ENCODE measurements at regions of chr20 and their contacts with region 1.

Region 1: GRCh38 chr20:33686100-33686983 is at the start of gene E2F1:
- DNase-seq: peak; percentile 98
- ATAC-seq: peak; percentile 84
- H3K4me3 Mint-ChIP-seq: peak within 1 kb of the TSS; percentile 95
- H3K27ac Mint-ChIP-seq: peak within 1 kb of the TSS; percentile 83
- H3K4me1 Mint-ChIP-seq: peaks cover 73% of the 10 kb centered on the region
- H3K27me3 Mint-ChIP-seq: no peaks in the 10 kb centered on the region
- total RNA-seq, gene E2F1: 45.9 to 50.9 TPM

Region 2: GRCh38 chr20:32535953-32536823 is 1150.2 kb before region 1 on chr20:
- CTCF ChIA-PET with region 1: no interaction called
- POLR2A ChIA-PET with region 1: no interaction called
- intact Hi-C with region 1: loop called in 1 of 2 experiments (anchors 5 kb)
- DNase-seq: peak; percentile 88
- ATAC-seq: peak; percentile 27
- H3K4me3 Mint-ChIP-seq: peak overlapping the region; percentile 72
- H3K27ac Mint-ChIP-seq: peak overlapping the region; percentile 95
- H3K4me1 Mint-ChIP-seq: peaks cover 82% of the 10 kb centered on the region
- H3K27me3 Mint-ChIP-seq: no peaks in the 10 kb centered on the region

Region 3: DNA sequence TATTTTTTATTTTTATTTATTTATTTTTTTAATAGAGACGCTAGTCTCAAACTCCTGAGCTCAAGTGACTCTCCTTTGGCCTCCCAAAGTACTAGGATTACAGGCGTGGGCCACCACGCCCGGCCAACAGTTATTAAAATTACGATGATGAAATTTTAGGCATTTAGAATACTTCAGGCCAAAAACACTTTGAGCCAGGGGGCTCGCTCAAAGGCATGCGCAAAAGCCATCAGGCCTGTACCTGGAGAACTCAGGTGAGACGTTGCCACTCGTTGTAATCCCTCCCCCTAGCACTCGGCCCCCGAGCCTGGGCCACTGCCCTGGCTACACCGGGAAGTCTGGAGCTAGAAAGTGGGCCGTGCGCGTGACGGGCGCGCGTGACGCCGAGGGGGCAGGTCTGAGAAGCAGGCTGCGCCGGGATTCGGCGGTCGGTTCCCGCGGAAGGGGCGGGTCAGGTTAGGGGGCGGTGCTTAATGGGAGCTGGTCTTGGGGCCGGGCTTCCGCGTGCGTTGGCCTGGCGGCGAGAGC is 196.8 kb before region 1 on chr20:
- CTCF ChIA-PET with region 1: interaction called, 3 read pairs
- POLR2A ChIA-PET with region 1: no interaction called
- intact Hi-C with region 1: loop called in 1 of 2 experiments (anchors 1 kb)
- DNase-seq: peak; percentile 99
- ATAC-seq: peak; percentile 98
- H3K4me3 Mint-ChIP-seq: peak overlapping the region; percentile 85
- H3K27ac Mint-ChIP-seq: peak overlapping the region; percentile 78
- H3K4me1 Mint-ChIP-seq: peaks cover 6% of the 10 kb centered on the region
- H3K27me3 Mint-ChIP-seq: no peaks in the 10 kb centered on the region

Region 4: DNA sequence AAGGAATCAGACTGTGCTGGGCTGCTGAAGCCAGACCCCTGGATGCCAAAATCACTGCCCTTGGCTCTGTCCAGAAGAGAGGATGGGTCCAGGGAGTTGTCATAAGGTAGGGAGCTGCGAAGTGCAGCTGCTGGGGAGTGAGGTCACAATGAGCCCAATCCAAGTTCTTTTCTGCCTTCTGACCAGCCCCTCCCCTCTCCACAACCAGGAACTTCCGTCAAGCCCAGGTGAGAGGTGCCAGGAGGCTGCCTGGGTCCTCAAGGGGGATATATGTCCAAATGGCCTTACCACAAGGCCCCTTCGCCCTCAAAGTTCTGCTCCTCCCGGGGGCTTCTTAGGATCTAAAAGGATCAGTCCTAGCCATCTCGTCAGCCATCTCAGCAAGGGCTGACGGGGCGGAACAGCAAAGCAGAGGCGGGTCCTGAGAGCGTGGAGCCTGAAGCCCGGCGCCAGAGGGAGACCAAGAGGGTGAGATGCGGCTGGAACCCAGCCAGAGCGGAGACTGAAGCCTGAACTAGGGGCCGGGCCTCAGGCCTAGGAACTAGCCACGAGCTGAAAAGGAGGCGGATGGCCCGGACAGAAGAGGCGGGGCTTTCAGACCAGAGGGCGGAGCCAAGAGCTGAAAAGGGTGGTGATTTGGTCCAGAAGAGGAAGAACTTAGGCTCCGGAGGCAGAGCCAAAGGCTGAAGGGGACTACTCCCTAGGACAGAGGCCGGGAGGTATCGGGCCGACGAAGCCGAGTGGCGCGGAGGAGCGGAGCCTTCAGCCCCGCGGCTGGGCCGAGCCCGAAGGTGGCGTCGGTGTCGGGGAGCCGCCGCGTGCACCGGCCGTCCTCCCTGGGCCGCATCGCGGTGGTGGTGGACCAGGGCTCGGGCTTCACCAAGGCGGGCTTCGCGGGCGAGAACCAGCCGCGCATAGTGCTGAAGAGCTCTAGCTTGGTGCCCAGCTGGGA is 19.8 kb before region 1 on chr20 and contains the start of gene ACTL10:
- CTCF ChIA-PET with region 1: interaction called, 91 read pairs
- POLR2A ChIA-PET with region 1: interaction called, 5 read pairs
- intact Hi-C with region 1: loop called in 1 of 2 experiments (anchors 1 kb)
- DNase-seq: peak; percentile 89
- ATAC-seq: peak; percentile 59
- H3K4me3 Mint-ChIP-seq: peak within 1 kb of the TSS; percentile 75
- H3K27ac Mint-ChIP-seq: peak within 1 kb of the TSS; percentile 90
- H3K4me1 Mint-ChIP-seq: peaks cover 31% of the 10 kb centered on the region
- H3K27me3 Mint-ChIP-seq: no peaks in the 10 kb centered on the region
- total RNA-seq, gene ACTL10: 0.91 to 1.7 TPM

Region 5: GRCh38 chr20:33709398-33709797 is 23.1 kb after region 1 on chr20:
- CTCF ChIA-PET with region 1: interaction called, 3 read pairs
- POLR2A ChIA-PET with region 1: no interaction called
- intact Hi-C with region 1: loop called in 1 of 2 experiments (anchors 1 kb)
- DNase-seq: peak; percentile 43
- ATAC-seq: peak; percentile 84
- H3K4me3 Mint-ChIP-seq: no peak overlapping the region
- H3K27ac Mint-ChIP-seq: peak overlapping the region; percentile 74
- H3K4me1 Mint-ChIP-seq: peaks cover 12% of the 10 kb centered on the region
- H3K27me3 Mint-ChIP-seq: no peaks in the 10 kb centered on the region

Region 6: DNA sequence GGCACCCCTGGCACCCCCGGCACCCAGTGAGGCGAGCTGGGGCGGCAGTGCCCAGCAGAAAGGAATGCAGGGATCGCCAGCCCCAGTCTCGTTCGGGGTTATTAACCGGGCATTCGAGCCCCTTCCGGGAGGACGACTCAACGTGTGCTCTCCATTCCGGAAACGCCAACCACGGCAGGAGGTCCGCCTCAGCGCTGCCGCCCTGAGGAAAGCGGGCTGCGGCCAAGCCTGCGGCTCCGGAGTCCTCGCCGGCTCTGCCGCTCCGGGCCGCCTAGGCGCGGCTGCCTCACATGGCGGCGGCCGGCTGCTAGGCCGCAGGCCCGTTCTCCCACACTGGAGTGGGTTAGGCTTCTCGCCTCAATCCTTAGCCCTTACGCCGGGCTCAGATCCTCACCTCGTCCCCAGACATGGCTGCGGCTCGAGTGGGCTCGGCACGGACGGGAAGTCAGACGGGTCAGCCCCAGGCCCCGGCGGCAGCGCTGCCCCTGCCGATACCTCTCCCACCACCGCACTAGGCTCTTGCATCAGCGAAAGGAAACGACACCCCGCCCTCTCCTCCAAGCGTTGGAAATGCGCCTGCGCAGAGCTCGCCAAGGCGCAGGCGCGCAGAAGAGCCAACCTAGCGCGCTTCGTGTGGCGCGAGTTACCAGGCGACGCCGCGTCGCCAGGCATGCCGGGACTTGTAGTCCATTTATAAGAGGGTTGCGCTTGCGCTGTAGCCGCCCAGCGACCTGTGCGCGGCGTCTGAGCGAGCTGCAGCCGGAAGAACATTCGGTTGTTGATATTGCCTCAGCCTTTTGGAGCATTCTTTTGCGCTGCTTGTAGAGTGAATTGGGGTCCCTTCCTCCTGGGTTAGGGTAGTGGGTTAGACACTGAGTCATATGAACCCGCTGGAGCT is 425.6 kb after region 1 on chr20 and contains the start of gene EIF2S2:
- CTCF ChIA-PET with region 1: no interaction called
- POLR2A ChIA-PET with region 1: no interaction called
- intact Hi-C with region 1: loop called in 1 of 2 experiments (anchors 1 kb)
- DNase-seq: peak; percentile 97
- ATAC-seq: peak; percentile 88
- H3K4me3 Mint-ChIP-seq: peak within 1 kb of the TSS; percentile 86
- H3K27ac Mint-ChIP-seq: peak within 1 kb of the TSS; percentile 97
- H3K4me1 Mint-ChIP-seq: peaks cover 38% of the 10 kb centered on the region
- H3K27me3 Mint-ChIP-seq: no peaks in the 10 kb centered on the region
- total RNA-seq, gene EIF2S2: 179 to 187 TPM

Measured in activated CD4-positive, alpha-beta T cell treated with anti-CD3 and anti-CD28 coated beads for 36 hours (primary cell).